ENCODE measurements at regions of chr10 and their contacts with region 1.

Region 1: DNA sequence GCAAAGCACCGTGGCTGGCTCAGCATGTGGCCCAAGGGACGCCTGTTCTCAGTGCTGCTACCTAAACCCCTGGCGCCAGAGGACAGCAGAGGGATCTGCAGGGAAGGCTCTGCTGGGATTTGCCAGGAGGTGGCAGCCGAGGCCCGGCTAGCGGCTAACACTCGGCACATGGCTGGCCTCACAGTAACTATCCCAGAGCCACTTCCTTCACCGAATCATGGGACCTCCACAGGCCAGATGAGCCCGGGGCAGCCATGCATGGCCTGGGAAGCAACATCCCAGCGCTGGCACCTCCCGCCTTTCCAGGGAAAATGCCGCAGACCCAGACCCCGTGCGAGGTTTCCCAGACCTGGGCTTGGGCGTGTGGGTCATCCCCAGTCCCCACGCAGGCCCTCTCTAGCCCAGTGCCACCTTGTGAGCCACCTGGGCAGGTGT is 36.4 kb downstream of the DPYSL4 start:
- DNase-seq: peak; percentile 68 to 85 (median 81)
- H3K4me3 ChIP-seq: no peak overlapping the region
- H3K27ac ChIP-seq: no peak overlapping the region
- H3K4me1 ChIP-seq: no peaks in the 10 kb centered on the region
- H3K27me3 ChIP-seq: no peaks in the 10 kb centered on the region
- CTCF ChIP-seq: peak; percentile 82 to 91 (median 84)
- EP300 ChIP-seq: no peak
- POLR2A ChIP-seq: no peak

Region 2: DNA sequence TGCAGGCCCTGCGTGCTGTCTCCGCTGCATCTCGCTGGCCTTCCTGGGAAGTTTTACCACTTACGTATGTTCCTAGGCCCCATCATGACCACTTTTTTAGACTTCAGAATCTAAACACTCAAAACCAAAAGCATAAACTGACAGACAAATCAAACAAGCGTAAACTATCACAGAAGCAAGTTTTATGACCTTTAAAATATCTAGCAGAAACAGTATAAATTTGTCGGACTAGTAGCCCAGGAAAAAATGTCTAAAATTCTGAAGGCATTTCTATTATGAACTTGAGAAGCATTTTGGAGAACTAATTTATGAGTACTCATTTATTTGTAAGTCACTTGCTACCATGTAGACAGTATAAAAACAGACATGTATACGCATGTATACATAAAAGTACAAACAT is 119.4 kb after region 1 on chr10:
- intact Hi-C with region 1: no loop called
- DNase-seq: no peak
- H3K4me3 ChIP-seq: no peak overlapping the region
- H3K27ac ChIP-seq: no peak overlapping the region
- H3K4me1 ChIP-seq: no peaks in the 10 kb centered on the region
- H3K27me3 ChIP-seq: no peaks in the 10 kb centered on the region
- CTCF ChIP-seq: no peak
- EP300 ChIP-seq: no peak
- POLR2A ChIP-seq: no peak

Region 3: GRCh38 chr10:132353456-132354355 is 130.5 kb after region 1 on chr10:
- intact Hi-C with region 1: loop called (anchors 2 to 5 kb)
- DNase-seq: peak in 1 of 5 donors; percentile 27
- H3K4me3 ChIP-seq: no peak overlapping the region
- H3K27ac ChIP-seq: no peak overlapping the region
- H3K4me1 ChIP-seq: no peaks in the 10 kb centered on the region
- H3K27me3 ChIP-seq: no peaks in the 10 kb centered on the region
- CTCF ChIP-seq: no peak
- EP300 ChIP-seq: no peak
- POLR2A ChIP-seq: no peak

Region 4: GRCh38 chr10:132359305-132360040 is 136.3 kb after region 1 on chr10:
- intact Hi-C with region 1: loop called in 3 of 4 experiments (anchors 2 to 5 kb)
- DNase-seq: peak in 1 of 5 donors; percentile 36
- H3K4me3 ChIP-seq: no peak overlapping the region
- H3K27ac ChIP-seq: no peak overlapping the region
- H3K4me1 ChIP-seq: no peaks in the 10 kb centered on the region
- H3K27me3 ChIP-seq: no peaks in the 10 kb centered on the region
- CTCF ChIP-seq: no peak
- EP300 ChIP-seq: no peak
- POLR2A ChIP-seq: no peak

Measured in ovary (tissue), 10 donors.